ENCODE measurements at regions of chr16 and their contacts with region 1.

Region 1: GRCh38 chr16:30692381-30693064 is 6.4 kb upstream of the SRCAP start:
- DNase-seq: no peak
- ATAC-seq: no peak
- H3K4me3 Mint-ChIP-seq: no peak overlapping the region
- H3K27ac Mint-ChIP-seq: no peak overlapping the region
- H3K4me1 Mint-ChIP-seq: peaks cover 22% of the 10 kb centered on the region
- H3K27me3 Mint-ChIP-seq: no peaks in the 10 kb centered on the region
- CTCF ChIP-seq: no peak

Region 2: GRCh38 chr16:30482366-30482765 is 210.2 kb before region 1 on chr16:
- CTCF ChIA-PET with region 1: no interaction called
- POLR2A ChIA-PET with region 1: no interaction called
- intact Hi-C with region 1: no loop called
- DNase-seq: peak; percentile 35
- ATAC-seq: peak; percentile 76
- H3K4me3 Mint-ChIP-seq: no peak overlapping the region
- H3K27ac Mint-ChIP-seq: peak overlapping the region; percentile 75
- H3K4me1 Mint-ChIP-seq: peaks cover 48% of the 10 kb centered on the region
- H3K27me3 Mint-ChIP-seq: no peaks in the 10 kb centered on the region
- CTCF ChIP-seq: peak; percentile 32

Region 3: GRCh38 chr16:30650369-30651123 is 42.0 kb before region 1 on chr16 and contains the start of gene PRR14:
- CTCF ChIA-PET with region 1: interaction called, 14 read pairs
- POLR2A ChIA-PET with region 1: interaction called, 14 read pairs
- intact Hi-C with region 1: no loop called
- DNase-seq: peak; percentile 100
- ATAC-seq: peak; percentile 82
- H3K4me3 Mint-ChIP-seq: peak within 1 kb of the TSS; percentile 88
- H3K27ac Mint-ChIP-seq: peak within 1 kb of the TSS; percentile 91
- H3K4me1 Mint-ChIP-seq: peaks cover 27% of the 10 kb centered on the region
- H3K27me3 Mint-ChIP-seq: no peaks in the 10 kb centered on the region
- CTCF ChIP-seq: no peak
- total RNA-seq, gene PRR14: 74.0 to 76.6 TPM

Region 4: GRCh38 chr16:30657866-30658730 is 34.4 kb before region 1 on chr16 and contains the start of gene FBRS:
- CTCF ChIA-PET with region 1: interaction called, 67 read pairs
- POLR2A ChIA-PET with region 1: interaction called, 36 read pairs
- intact Hi-C with region 1: loop called (anchors 1 kb)
- DNase-seq: peak; percentile 100
- ATAC-seq: peak; percentile 79
- H3K4me3 Mint-ChIP-seq: peak within 1 kb of the TSS; percentile 97
- H3K27ac Mint-ChIP-seq: peak within 1 kb of the TSS; percentile 100
- H3K4me1 Mint-ChIP-seq: peaks cover 41% of the 10 kb centered on the region
- H3K27me3 Mint-ChIP-seq: no peaks in the 10 kb centered on the region
- CTCF ChIP-seq: peak; percentile 62
- total RNA-seq, gene FBRS: 80.3 to 85.8 TPM

Region 5: DNA sequence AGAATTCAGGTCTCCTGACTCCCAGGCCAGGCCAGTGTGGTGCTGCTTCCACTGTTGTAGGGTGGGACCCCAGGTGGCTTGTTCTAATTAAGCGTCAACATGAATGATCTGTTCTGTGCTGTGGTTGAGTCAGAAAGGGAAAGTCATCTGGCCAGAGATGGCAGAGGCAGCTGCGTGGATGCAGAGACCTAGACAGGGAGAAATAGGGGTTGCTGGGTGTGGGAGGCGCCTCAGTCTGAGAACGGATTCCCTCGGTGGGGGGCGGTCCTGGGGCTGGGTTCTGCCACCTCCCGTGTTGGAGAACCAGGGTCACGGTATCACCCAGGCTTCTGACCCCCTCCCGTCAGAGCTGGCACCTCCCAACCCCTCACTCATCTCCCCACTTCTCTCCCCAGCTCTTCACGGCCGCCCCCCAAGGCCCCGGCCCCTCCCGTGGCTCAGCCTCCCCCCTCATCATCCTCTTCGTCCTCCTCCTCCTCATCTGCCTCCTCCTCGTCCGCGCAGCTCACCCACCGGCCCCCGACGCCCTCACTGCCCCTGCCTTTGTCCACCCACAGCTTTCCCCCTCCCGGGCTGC is 28.6 kb before region 1 on chr16:
- CTCF ChIA-PET with region 1: interaction called, 67 read pairs
- POLR2A ChIA-PET with region 1: interaction called, 36 read pairs
- intact Hi-C with region 1: loop called (anchors 1 kb)
- DNase-seq: no peak
- ATAC-seq: no peak
- H3K4me3 Mint-ChIP-seq: peak overlapping the region; percentile 16
- H3K27ac Mint-ChIP-seq: peak overlapping the region; percentile 98
- H3K4me1 Mint-ChIP-seq: peaks cover 39% of the 10 kb centered on the region
- H3K27me3 Mint-ChIP-seq: no peaks in the 10 kb centered on the region
- CTCF ChIP-seq: no peak

Region 6: DNA sequence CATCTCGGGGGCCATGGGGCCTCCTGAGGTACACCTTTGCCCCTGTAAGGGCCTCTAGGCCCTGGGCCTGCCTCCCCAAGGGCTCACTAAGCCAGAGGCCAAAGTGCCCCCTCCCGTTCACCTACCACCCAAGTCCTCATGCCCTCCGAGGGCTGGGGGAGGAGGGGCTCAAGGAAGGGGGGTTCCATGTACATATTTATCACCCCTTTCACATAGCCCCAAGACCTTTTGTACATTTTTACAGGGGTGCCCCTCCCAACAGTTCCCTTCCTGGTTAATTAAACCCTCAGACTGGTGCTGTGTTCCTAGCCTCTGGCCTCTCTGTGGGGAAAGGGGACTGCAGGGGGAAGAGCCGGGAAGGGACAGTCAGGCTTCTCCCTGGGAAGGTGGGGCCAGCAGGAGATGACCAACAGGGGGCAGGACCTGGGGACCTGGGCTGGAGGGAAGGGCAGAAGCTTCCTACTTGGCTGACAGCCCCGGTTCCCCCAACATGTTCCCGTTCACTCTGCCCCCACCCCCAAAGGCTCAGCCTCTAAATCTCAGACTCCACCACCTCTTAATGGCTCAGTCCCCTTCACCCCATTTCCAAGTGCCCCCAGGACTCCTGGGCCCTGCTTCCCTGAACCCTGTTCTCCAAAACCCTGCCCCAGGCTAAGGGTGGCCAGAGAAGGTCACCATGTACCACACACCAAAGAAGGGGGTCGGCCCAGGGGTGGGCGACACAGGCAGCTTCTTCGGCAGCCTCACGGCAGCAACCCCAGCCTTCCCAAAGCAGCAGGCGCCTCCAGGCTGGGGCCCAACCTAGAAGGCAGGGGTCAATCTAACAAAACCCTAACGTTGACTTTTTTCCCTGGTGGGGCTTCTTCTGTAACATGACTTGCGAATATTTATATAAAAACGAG is 22.4 kb before region 1 on chr16:
- CTCF ChIA-PET with region 1: interaction called, 25 read pairs
- POLR2A ChIA-PET with region 1: interaction called, 11 read pairs
- intact Hi-C with region 1: no loop called
- DNase-seq: no peak
- ATAC-seq: no peak
- H3K4me3 Mint-ChIP-seq: no peak overlapping the region
- H3K27ac Mint-ChIP-seq: no peak overlapping the region
- H3K4me1 Mint-ChIP-seq: peaks cover 5% of the 10 kb centered on the region
- H3K27me3 Mint-ChIP-seq: no peaks in the 10 kb centered on the region
- CTCF ChIP-seq: no peak

Region 7: DNA sequence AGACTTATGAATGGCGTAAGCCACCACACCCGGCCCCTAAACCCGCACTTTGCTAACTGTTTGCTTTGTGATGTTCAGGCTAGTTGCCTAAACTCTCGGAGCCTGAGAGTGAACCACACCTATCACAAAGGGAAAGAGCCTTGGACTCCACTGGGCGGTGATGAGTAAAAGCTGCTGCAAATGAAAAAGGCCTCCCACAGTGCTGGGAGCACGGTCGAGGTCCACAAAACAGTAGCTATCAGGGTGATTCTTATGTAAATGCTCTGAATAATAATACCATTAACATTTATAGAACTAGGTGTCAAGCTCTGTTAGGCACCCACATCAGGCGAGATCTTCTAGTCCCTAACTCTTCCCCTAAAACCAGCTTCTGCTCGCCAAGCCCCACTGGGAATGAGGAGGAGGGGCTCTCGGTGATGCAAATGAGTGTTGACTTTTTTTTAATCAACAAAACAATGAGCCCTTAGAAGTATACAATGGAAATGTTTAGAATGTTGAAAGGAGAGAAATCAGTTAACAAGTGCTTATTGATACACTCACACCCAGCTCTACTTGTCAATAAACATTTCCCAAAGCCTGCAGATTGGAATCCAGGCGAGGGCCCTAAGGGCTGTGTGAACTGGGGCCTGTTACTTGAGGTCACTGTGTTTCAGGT is 14.5 kb before region 1 on chr16:
- CTCF ChIA-PET with region 1: interaction called, 12 read pairs
- POLR2A ChIA-PET with region 1: interaction called, 4 read pairs
- intact Hi-C with region 1: no loop called
- DNase-seq: no peak
- ATAC-seq: no peak
- H3K4me3 Mint-ChIP-seq: no peak overlapping the region
- H3K27ac Mint-ChIP-seq: no peak overlapping the region
- H3K4me1 Mint-ChIP-seq: no peaks in the 10 kb centered on the region
- H3K27me3 Mint-ChIP-seq: no peaks in the 10 kb centered on the region
- CTCF ChIP-seq: no peak

Region 8: DNA sequence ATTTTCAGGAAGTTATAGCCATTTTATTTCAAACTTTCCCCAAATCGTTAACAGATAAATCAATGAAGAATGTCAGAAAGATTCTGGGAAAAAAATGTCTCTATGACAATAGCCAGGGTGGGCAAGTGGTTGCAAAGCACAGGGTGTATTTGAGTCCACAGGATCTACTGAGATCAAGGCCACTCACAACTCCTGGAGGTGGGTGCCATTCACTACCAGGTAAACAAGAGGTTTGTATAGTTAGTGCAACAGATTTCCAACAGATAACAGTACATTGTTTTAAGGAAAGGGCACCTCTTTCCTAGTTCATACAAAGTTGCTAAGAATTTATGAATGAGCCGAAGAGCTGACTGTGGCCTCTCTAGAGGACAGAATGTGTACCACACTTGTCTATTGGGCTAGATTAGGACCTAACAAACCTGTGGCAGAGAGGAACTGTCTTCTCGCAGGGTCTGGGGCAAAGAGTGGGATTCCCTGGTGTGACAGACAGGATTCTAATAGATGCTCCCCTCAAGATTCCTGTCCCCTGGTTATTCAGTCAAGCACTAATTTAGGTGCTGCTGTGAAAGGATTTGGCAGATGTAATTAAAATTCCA is 146.5 kb after region 1 on chr16:
- CTCF ChIA-PET with region 1: no interaction called
- POLR2A ChIA-PET with region 1: no interaction called
- intact Hi-C with region 1: no loop called
- DNase-seq: no peak
- ATAC-seq: no peak
- H3K4me3 Mint-ChIP-seq: no peak overlapping the region
- H3K27ac Mint-ChIP-seq: no peak overlapping the region
- H3K4me1 Mint-ChIP-seq: no peaks in the 10 kb centered on the region
- H3K27me3 Mint-ChIP-seq: no peaks in the 10 kb centered on the region
- CTCF ChIP-seq: no peak

Measured in activated CD8-positive, alpha-beta T cell treated with anti-CD3 and anti-CD28 coated beads for 36 hours (primary cell).